Endothelial cell of umbilical vein (primary cell): ENCODE measurements at regions of chr7 and their contacts with region 1.

Region 1: DNA sequence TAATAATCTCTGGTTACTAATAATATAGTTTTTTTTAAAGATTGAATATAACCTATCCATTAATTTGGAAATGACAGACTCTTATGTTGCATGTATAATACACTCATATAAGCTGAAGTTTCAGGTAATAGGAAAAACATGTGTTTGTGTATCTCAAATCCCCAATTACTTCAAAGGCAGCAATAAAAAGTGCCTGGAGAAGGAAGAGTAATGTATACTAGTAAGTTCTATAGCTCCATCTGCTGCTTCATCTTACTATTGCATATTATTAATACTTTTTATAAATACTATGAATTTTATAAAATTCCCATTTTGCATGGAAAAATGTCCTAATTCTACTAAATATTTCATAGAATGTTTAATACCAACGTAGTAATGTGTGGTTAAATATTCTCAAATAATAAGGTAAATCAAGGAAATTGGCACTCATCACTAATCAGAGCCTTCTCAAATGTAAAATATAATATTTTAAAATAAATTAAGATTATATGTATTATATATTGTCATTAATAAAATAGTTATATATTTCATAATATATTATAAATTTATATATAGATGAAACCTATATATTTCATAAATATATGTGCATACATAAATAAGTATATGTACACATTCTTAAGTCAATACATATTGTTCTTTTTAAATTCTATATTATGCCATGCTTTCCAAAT is 311.9 kb downstream of the HGF start:
- DNase-seq: peak; percentile 10
- H3K4me3 ChIP-seq: no peak overlapping the region
- H3K27ac ChIP-seq: no peak overlapping the region
- H3K4me1 ChIP-seq: no peaks in the 10 kb centered on the region
- H3K27me3 ChIP-seq: peaks cover 8 to 13% of the 10 kb centered on the region in 2 experiments
- CTCF ChIP-seq: peak; percentile 12 to 20
- POLR2A ChIP-seq: no peak

Region 2: GRCh38 chr7:81393018-81393417 is 65.0 kb before region 1 on chr7:
- CTCF ChIA-PET with region 1: no interaction called
- POLR2A ChIA-PET with region 1: no interaction called
- dilution Hi-C with region 1: no loop called
- intact Hi-C with region 1: no loop called
- DNase-seq: no peak
- H3K4me3 ChIP-seq: no peak overlapping the region
- H3K27ac ChIP-seq: no peak overlapping the region
- H3K4me1 ChIP-seq: no peaks in the 10 kb centered on the region
- H3K27me3 ChIP-seq: no peaks in the 10 kb centered on the region
- CTCF ChIP-seq: no peak
- POLR2A ChIP-seq: no peak

Region 3: DNA sequence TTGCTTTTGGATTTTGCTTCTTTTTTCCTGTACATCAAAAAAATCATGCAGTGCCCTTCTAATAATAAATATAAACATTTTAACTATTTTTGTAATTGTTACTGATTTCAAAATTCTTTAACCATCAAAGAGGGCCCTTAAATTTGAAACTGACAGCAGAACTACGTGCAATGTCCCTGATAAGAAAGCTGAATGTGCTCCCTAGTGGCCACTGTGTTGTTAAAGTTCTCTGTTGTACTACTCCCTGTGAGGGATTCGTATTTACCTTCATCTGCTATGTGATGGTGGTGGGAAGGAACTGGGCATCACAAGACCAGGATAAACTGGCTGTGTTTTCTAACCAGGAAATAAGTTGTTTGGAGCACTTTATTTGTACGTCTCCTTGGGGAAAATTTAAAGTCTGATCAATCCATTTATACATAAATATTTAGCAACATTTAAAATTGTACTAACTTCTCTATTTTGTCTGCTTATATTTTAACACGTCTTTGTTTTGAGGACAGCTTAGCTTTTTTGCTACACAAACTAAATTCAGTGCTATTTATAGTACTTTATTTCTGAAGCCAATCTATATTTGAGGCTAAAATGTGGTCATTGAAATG is 10.5 kb before region 1 on chr7:
- CTCF ChIA-PET with region 1: interaction called, 15 read pairs
- POLR2A ChIA-PET with region 1: no interaction called
- dilution Hi-C with region 1: no loop called
- intact Hi-C with region 1: no loop called
- DNase-seq: peak; percentile 14
- H3K4me3 ChIP-seq: no peak overlapping the region
- H3K27ac ChIP-seq: no peak overlapping the region
- H3K4me1 ChIP-seq: no peaks in the 10 kb centered on the region
- H3K27me3 ChIP-seq: no peaks in the 10 kb centered on the region
- CTCF ChIP-seq: peak; percentile 18 to 21
- POLR2A ChIP-seq: no peak